Naive thymus-derived CD4-positive, alpha-beta T cell (primary cell): ENCODE measurements at regions of chr1 and their contacts with region 1.

Region 1: GRCh38 chr1:101228424-101229134 is 8.2 kb upstream of the S1PR1 start:
- DNase-seq: no peak
- ATAC-seq: peak; percentile 20
- H3K4me3 ChIP-seq: no peak overlapping the region
- H3K4me3 Mint-ChIP-seq: no peak overlapping the region
- H3K27ac ChIP-seq: no peak overlapping the region
- H3K27ac Mint-ChIP-seq: peak overlapping the region in 5 of 9 donors; percentile 4 to 100 (median 25)
- H3K4me1 ChIP-seq: peaks cover 0 to 7% of the 10 kb centered on the region in 2 donors
- H3K4me1 Mint-ChIP-seq: peaks cover 17 to 45% (median 35%) of the 10 kb centered on the region in 7 donors
- H3K27me3 ChIP-seq: no peaks in the 10 kb centered on the region
- H3K27me3 Mint-ChIP-seq: no peaks in the 10 kb centered on the region

Region 2: GRCh38 chr1:101216623-101217022 is 12.0 kb before region 1 on chr1:
- CTCF ChIA-PET with region 1: no interaction called
- POLR2A ChIA-PET with region 1: interaction called, 5 read pairs
- intact Hi-C with region 1: loop called in 1 of 2 experiments (anchors 1 kb)
- DNase-seq: no peak
- ATAC-seq: no peak
- H3K4me3 ChIP-seq: no peak overlapping the region
- H3K4me3 Mint-ChIP-seq: no peak overlapping the region
- H3K27ac ChIP-seq: no peak overlapping the region
- H3K27ac Mint-ChIP-seq: no peak overlapping the region
- H3K4me1 ChIP-seq: no peaks in the 10 kb centered on the region
- H3K4me1 Mint-ChIP-seq: peaks cover 2 to 14% (median 9%) of the 10 kb centered on the region in 7 donors
- H3K27me3 ChIP-seq: no peaks in the 10 kb centered on the region
- H3K27me3 Mint-ChIP-seq: no peaks in the 10 kb centered on the region